G401 (cell line): ENCODE measurements at regions of chr11 and their contacts with region 1.

Region 1: DNA sequence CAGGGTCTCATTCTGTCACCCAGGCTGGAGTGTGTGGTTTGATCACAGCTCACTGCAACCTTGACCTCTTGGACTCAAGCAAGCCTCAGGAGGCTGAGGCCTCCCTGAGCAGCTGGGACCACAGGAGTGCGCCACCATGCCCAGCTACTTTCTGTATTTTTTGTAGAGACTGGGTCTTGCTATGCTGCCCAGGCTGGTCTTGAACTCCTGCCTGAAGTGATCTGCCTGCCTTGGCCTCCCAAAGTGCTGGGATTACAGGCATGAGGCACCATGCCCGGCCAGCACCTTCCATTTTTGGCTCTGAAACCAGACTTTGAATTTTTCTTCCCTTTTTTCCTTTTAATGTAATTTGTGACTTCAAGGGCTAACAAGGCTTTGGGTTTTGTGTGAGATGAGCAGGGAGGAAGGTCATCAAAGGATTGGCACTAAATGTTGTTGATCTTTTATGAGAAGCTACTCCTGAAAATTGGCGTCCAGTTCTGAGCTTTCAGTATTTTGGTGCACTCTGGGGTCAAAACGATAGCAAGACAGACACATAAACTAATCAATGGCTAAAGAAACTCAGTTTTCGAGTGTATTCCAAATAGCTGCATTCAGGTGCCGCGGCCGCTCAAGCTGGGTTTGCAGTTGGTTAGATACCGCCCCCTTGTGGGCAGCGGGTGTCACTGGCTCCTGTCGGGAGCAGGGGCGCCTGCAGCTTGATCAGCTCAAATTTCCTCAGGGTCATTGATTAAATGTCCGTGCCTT is 51.9 kb upstream of the CLMP start:
- DNase-seq: peak; percentile 89

Region 2: DNA sequence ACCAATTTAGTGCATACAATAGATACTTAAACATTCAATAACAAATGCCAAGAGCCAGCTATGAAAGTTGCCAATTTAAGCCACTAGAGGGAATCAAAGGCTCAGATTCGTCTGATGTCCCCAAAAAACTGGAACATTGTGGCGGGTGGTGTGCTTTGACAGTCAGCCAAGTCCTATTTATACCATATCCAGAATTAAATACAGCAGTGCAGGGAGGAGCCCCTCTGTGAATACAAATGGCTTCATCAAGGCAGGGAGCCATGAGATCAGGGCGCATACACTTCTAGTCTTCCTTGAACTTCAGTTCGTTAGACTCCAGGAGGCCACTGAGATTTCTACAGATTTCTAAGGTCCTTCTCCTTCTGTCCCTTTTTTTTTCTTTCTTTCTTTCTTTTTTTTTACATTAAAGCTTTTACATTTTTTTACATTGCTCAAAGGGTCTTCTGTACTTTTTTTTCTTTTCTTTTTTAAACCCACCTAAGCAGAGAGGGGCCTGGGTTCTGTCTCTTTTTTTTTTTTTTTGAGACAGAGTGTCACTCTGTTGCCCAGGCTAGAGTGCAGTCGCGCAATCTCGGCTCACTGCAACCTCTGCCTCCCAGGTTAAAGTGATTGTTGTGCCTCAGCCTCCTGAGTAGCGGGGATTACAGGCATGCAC is 143.5 kb before region 1 on chr11:
- in situ Hi-C with region 1: loop called (anchors 25 kb)
- DNase-seq: peak; percentile 99